ENCODE measurements at regions of chr10 and their contacts with region 1.

Region 1: DNA sequence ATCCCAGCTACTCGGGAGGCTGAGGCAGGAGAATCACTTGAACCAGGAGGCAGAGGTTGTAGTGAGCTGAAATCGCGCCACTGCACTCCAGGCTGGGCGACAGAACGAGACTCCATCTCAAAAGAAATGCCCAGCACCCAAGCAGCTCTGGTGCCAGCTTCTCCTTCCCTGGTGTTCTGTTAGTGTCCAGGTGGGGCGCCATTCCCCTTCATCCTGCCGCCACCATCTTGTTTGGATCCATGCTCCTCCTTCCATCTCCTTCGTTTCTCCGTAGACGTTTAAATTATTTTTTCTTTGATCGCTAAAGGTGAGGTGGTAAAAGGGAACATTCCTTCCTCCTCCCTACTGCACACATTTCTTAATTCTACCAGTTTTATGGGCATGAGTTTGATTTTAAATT is 30.3 kb downstream of the PROSER2 start:
- DNase-seq: no peak
- H3K4me3 ChIP-seq: no peak overlapping the region
- H3K27ac ChIP-seq: no peak overlapping the region
- H3K4me1 ChIP-seq: no peaks in the 10 kb centered on the region
- H3K27me3 ChIP-seq: no peaks in the 10 kb centered on the region
- CTCF ChIP-seq: peak; percentile 32 to 78 (median 73)
- EP300 ChIP-seq: no peak
- POLR2A ChIP-seq: no peak
- RAD21 ChIP-seq: peak; percentile 51 to 53

Region 2: GRCh38 chr10:11830836-11831519 is 22.5 kb before region 1 on chr10:
- CTCF ChIA-PET with region 1: interaction called, 14 read pairs
- POLR2A ChIA-PET with region 1: interaction called, 3 read pairs
- DNase-seq: no peak
- H3K4me3 ChIP-seq: no peak overlapping the region
- H3K27ac ChIP-seq: no peak overlapping the region
- H3K4me1 ChIP-seq: peaks cover 2 to 9% (median 5%) of the 10 kb centered on the region in 4 experiments; a peak in 4 of 7 replicates
- H3K27me3 ChIP-seq: no peaks in the 10 kb centered on the region
- CTCF ChIP-seq: no peak
- EP300 ChIP-seq: no peak
- POLR2A ChIP-seq: no peak
- RAD21 ChIP-seq: no peak

Region 3: GRCh38 chr10:11863353-11864109 is 10.1 kb after region 1 on chr10:
- CTCF ChIA-PET with region 1: interaction called, 10 read pairs
- POLR2A ChIA-PET with region 1: no interaction called
- DNase-seq: no peak
- H3K4me3 ChIP-seq: no peak overlapping the region
- H3K27ac ChIP-seq: no peak overlapping the region
- H3K4me1 ChIP-seq: peaks cover 0 to 5% (median 2%) of the 10 kb centered on the region in 4 experiments; a peak in 3 of 7 replicates
- H3K27me3 ChIP-seq: no peaks in the 10 kb centered on the region
- CTCF ChIP-seq: no peak
- EP300 ChIP-seq: no peak
- POLR2A ChIP-seq: no peak
- RAD21 ChIP-seq: no peak